GM13977 (cell line): ENCODE measurements at regions of chr7 and their contacts with region 1.

Region 1: GRCh38 chr7:45938626-45939302 is 17.7 kb upstream of the IGFBP3 start:
- DNase-seq: no peak
- CTCF ChIP-seq: no peak

Region 2: DNA sequence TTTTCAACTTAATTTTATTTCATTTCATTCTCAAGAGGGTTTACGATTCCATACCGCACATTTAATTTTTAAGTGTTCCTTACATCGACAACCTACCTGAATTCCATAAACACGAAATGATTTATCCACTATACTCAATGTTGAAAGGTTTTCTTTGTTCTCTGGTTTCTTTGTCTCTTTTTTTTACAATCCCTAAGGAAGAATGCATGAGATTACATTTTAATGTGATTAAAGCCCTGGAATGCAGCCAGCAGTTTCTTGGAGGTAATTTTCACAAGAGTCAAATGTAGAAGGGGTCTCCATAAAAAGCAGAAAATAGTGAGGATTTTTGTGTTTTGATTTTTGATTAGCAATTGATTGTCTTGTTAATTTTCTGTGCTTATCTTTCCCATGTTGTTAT is 423.8 kb before region 1 on chr7:
- in situ Hi-C with region 1: no loop called
- DNase-seq: no peak
- CTCF ChIP-seq: no peak

Region 3: DNA sequence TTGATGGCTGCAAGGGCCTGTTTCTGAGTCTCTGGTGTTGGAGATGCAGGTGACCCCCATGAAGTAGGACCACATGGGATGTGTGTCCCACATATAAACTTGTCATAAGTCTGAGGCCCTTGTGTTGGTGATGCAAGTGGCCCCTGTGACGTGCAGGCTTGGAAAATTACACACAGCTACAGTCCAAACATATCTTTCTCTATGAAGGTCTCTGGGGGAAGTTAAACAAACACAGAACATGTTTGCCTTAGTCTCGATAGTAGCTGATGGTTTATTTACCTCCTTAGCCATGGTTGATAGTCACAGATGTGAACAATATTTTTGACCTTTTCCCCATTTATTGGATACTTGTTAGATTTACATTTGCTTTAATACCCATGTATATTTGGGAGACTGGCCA is 299.8 kb before region 1 on chr7:
- in situ Hi-C with region 1: no loop called
- DNase-seq: no peak
- CTCF ChIP-seq: no peak

Region 4: DNA sequence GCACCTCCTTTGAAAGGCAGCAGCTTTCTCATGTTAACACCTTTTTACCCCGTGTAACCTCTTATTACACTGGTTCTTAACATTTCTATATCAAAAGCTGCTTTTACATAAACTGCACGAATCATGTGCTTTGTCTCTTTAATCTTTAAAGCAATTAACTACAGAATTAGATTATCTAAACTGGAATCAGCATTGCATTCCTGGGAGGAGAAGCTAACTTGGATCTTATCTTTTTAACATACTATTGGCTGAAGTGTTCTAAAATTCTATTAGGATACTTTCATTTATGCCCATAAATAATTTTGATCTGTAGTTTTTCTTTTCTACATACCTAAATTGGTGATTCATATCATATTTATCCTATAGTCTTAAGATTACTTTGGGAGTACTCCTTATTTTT is 410.7 kb after region 1 on chr7:
- in situ Hi-C with region 1: loop called (anchors 25 kb)
- DNase-seq: no peak
- CTCF ChIP-seq: no peak